ENCODE measurements at regions of chr4 and their contacts with region 1.

Region 1: GRCh38 chr4:155529272-155529671 is 137.4 kb upstream of the GUCY1A1 start:
- DNase-seq: peak; percentile 74
- H3K4me3 ChIP-seq: no peak overlapping the region
- H3K27ac ChIP-seq: no peak overlapping the region
- H3K4me1 ChIP-seq: peaks cover 13% of the 10 kb centered on the region
- H3K27me3 ChIP-seq: no peaks in the 10 kb centered on the region
- CTCF ChIP-seq: peak; percentile 29 to 43
- POLR2A ChIP-seq: no peak

Region 2: DNA sequence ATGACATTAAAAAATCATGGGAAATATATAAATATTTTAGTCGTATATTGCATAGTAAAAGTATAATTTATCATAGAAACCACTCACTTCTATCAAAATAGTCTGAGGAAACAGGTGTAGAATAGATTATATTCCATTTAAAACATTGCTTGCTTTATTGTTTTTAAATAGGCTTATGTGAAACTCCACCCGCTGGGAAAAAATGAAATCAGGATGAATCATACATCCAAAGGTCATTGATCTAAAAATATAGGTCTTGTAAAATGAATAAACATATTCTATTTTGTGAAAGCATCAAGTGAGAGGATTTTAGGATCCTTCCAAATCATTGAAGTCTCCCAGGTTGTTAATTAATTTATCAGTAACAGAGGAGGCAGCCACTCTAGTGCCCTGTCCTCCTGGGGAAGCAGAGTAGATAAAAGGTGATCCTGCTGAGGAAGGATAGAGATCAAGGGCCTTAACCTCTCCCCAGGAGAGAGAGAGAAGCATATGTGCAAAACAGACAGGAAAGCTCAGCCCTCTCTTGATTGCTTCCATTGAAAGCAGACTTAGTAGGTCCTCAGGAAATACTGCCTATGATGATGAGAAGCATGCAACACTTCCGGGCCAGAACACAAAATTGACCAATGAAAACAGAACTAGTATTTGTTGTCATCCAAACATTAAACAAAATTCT is 55.7 kb before region 1 on chr4:
- CTCF ChIA-PET with region 1: no interaction called
- POLR2A ChIA-PET with region 1: no interaction called
- dilution Hi-C with region 1: no loop called
- intact Hi-C with region 1: loop called (anchors 1 kb)
- DNase-seq: peak; percentile 93
- H3K4me3 ChIP-seq: no peak overlapping the region
- H3K27ac ChIP-seq: peak overlapping the region; percentile 13
- H3K4me1 ChIP-seq: peaks cover 16% of the 10 kb centered on the region
- H3K27me3 ChIP-seq: no peaks in the 10 kb centered on the region
- CTCF ChIP-seq: no peak
- POLR2A ChIP-seq: no peak

Region 3: DNA sequence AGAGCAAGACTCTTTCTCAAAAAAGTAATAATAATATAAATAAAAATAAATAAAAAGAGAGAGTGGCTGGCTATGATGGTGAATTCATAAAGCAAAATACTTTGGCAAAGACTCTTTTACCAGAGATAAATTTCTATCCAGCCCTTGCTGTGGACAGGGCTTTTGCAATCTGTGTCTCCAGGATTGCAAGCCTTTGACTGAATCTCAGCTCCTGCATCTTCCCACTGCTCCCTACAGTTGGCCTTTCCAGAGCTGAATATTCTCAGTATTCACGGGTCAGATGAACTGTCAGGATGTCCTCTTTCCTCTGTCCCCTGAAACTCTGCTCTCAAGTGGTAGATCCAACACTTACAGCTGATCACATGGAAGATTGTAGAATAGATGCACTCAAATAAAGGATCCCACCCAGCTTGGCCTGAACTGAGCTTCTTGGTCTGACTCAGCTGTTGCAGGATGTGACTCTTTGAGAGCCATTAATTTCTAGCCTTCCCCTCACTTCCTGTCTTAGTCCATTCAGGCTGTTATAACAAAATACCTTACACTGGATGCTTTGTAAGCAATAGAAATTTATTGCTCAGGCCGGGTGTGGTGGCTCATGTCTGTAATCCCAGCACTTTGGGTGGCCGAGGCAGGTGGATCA is 14.0 kb after region 1 on chr4:
- CTCF ChIA-PET with region 1: interaction called, 23 read pairs
- POLR2A ChIA-PET with region 1: no interaction called
- dilution Hi-C with region 1: no loop called
- intact Hi-C with region 1: no loop called
- DNase-seq: peak; percentile 95
- H3K4me3 ChIP-seq: no peak overlapping the region
- H3K27ac ChIP-seq: peak overlapping the region; percentile 39
- H3K4me1 ChIP-seq: peaks cover 9% of the 10 kb centered on the region
- H3K27me3 ChIP-seq: no peaks in the 10 kb centered on the region
- CTCF ChIP-seq: no peak
- POLR2A ChIP-seq: no peak

Region 4: GRCh38 chr4:155667568-155668511 is 138.6 kb after region 1 on chr4:
- CTCF ChIA-PET with region 1: interaction called, 14 read pairs
- POLR2A ChIA-PET with region 1: no interaction called
- dilution Hi-C with region 1: no loop called
- intact Hi-C with region 1: loop called (anchors 2 kb)
- DNase-seq: peak; percentile 66
- H3K4me3 ChIP-seq: peak overlapping the region; percentile 39 to 83 (median 46)
- H3K27ac ChIP-seq: no peak overlapping the region
- H3K4me1 ChIP-seq: peaks cover 19% of the 10 kb centered on the region
- H3K27me3 ChIP-seq: peaks cover 12 to 16% of the 10 kb centered on the region in 2 experiments
- CTCF ChIP-seq: no peak
- POLR2A ChIP-seq: no peak

Region 5: GRCh38 chr4:155758481-155759404 is 229.5 kb after region 1 on chr4 and contains the start of gene GUCY1B1:
- CTCF ChIA-PET with region 1: interaction called, 13 read pairs
- POLR2A ChIA-PET with region 1: no interaction called
- dilution Hi-C with region 1: no loop called
- intact Hi-C with region 1: no loop called
- DNase-seq: peak; percentile 95
- H3K4me3 ChIP-seq: peak within 1 kb of the TSS; percentile 32 to 53 (median 44)
- H3K27ac ChIP-seq: no peak within 1 kb of the TSS
- H3K4me1 ChIP-seq: peaks cover 6% of the 10 kb centered on the region
- H3K27me3 ChIP-seq: no peaks in the 10 kb centered on the region
- CTCF ChIP-seq: peak; percentile 30 to 62
- POLR2A ChIP-seq: no peak
- total RNA-seq, gene GUCY1B1: 4.7 and 7.0 TPM in 2 replicates

Region 6: GRCh38 chr4:155777971-155778735 is 248.9 kb after region 1 on chr4:
- CTCF ChIA-PET with region 1: interaction called, 41 read pairs
- POLR2A ChIA-PET with region 1: no interaction called
- dilution Hi-C with region 1: no loop called
- intact Hi-C with region 1: no loop called
- DNase-seq: no peak
- H3K4me3 ChIP-seq: no peak overlapping the region
- H3K27ac ChIP-seq: no peak overlapping the region
- H3K4me1 ChIP-seq: no peaks in the 10 kb centered on the region
- H3K27me3 ChIP-seq: no peaks in the 10 kb centered on the region
- CTCF ChIP-seq: no peak
- POLR2A ChIP-seq: no peak

Region 7: GRCh38 chr4:155914782-155915181 is 385.5 kb after region 1 on chr4:
- CTCF ChIA-PET with region 1: no interaction called
- POLR2A ChIA-PET with region 1: no interaction called
- dilution Hi-C with region 1: no loop called
- intact Hi-C with region 1: no loop called
- DNase-seq: no peak
- H3K4me3 ChIP-seq: no peak overlapping the region
- H3K27ac ChIP-seq: no peak overlapping the region
- H3K4me1 ChIP-seq: no peaks in the 10 kb centered on the region
- H3K27me3 ChIP-seq: no peaks in the 10 kb centered on the region
- CTCF ChIP-seq: no peak
- POLR2A ChIP-seq: no peak

Region 8: DNA sequence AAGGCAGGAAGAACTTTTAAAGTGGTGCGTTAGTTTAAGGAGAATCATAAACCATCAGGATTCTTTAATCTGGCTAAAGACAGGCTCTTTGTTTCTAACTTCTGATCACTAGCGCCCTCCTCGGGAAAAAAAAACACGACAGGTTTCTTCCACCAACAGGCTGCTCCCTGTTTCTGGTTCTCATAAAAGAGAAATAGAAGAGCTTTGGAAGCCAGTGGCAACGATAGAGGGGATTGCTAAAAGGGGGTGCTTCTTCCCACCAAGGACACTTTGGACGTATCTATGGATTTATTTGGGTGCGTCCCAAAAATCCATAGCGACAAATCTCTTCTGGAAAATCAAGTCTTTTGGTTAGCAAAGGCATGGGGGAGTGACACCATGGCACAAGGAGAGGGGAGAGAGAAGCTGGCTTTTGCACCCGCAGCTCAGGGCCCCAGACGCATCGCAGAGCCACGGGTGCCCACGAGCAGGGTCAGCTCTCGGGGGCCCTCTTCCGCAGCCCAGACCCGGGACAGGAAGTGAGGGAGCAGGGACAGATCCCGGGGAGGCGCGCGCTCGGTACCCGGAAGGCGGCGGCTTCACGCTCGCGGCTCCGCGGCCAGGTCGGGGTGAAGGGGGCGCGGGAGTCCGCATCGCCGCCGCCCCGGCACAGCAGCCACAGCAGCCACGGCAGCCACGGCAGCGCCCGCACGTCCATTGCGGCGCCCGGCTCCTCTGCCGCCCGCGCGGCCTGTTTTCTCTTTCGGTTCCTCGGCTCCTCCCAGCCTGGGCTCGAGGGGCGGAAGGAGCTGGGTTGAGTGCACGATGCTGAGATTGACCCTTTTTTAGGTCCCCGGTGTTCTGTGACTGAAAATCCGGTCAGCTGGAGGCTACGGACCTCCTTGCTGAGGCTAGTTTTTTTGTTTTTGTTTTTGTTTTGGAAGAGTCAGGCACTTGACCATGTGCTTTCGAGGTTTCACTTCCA is 424.2 kb after region 1 on chr4 and contains the start of gene CTSO:
- CTCF ChIA-PET with region 1: interaction called, 15 read pairs
- POLR2A ChIA-PET with region 1: no interaction called
- dilution Hi-C with region 1: no loop called
- intact Hi-C with region 1: loop called (anchors 1 kb)
- DNase-seq: peak; percentile 88
- H3K4me3 ChIP-seq: peak within 1 kb of the TSS; percentile 54 to 86 (median 79)
- H3K27ac ChIP-seq: peak within 1 kb of the TSS; percentile 92
- H3K4me1 ChIP-seq: peaks cover 6% of the 10 kb centered on the region
- H3K27me3 ChIP-seq: no peaks in the 10 kb centered on the region
- CTCF ChIP-seq: peak in 1 of 2 donors; percentile 58
- POLR2A ChIP-seq: peak; percentile 83
- total RNA-seq, gene CTSO: 6.7 and 7.9 TPM in 2 replicates

Measured in endothelial cell of umbilical vein (primary cell).